ENCODE measurements at regions of chr2 and their contacts with region 1.

Region 1: DNA sequence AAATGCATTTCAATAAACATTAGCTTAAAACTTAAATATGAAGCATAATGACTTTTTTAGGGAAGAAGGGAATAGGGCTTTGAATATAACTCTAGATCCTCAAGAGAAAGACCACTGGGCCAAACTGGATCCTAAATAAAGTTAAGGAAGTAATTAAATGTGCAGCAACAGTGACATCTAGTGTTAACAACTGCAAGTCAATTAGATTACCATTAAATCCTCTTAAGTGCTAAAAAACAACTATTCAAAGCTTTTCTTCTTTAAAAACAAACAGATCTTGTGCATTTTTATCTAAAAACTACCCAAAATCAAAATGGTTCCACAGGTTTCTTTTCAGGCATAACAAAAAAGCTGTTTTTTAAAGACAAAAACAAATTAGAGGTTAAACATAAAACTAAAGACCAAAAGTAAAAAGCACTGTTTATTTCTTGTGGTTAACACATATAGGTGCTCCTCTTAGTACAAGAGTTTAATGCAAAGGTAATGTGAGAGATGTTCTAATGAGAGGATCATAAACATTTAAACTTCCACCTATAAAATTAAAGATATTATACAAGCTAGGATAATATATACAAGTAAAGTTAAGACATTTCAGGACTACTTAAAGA is 111.4 kb downstream of the THADA start:
- DNase-seq: peak; percentile 79
- ATAC-seq: no peak
- H3K4me3 ChIP-seq: no peak overlapping the region
- H3K27ac ChIP-seq: no peak overlapping the region
- H3K4me1 ChIP-seq: peaks cover 27% of the 10 kb centered on the region
- H3K27me3 ChIP-seq: no peaks in the 10 kb centered on the region
- CTCF ChIP-seq: peak; percentile 82

Region 2: DNA sequence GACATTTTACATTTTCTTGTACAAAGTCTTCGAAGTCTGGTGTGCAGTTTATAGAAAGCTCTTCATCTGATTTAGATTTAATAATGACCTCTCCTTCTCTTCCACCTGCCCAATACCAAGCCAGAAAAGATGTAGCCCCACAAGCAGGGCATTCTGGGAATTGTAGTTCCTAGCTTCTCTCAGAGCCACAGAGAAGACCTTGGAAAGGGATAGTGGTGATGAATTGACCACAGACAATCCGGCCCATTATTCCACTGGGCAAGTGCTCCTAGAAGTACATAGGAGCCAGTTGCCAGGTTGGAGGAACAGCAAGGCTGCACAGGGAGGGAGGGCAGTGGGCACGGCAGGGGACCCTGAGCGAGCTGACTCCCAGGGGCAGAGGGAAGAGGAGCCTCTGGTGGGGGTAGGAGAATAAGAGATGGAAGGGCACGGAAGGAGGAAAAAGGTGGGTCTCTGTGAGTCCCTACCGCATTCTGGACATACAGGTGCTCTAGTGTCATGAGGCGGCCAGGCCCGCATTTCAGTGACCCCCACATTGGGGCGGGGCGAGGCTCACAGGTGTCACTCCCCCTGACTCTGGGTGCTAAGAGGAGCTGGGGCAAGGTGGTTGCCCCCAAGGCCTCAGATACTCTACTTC is 539.5 kb before region 1 on chr2:
- CTCF ChIA-PET with region 1: no interaction called
- POLR2A ChIA-PET with region 1: no interaction called
- intact Hi-C with region 1: loop called (anchors 1 kb)
- DNase-seq: peak; percentile 66
- ATAC-seq: peak; percentile 64
- H3K4me3 ChIP-seq: no peak overlapping the region
- H3K27ac ChIP-seq: no peak overlapping the region
- H3K4me1 ChIP-seq: no peaks in the 10 kb centered on the region
- H3K27me3 ChIP-seq: no peaks in the 10 kb centered on the region
- CTCF ChIP-seq: no peak

Region 3: GRCh38 chr2:43088143-43089073 is 396.0 kb before region 1 on chr2:
- CTCF ChIA-PET with region 1: no interaction called
- POLR2A ChIA-PET with region 1: no interaction called
- intact Hi-C with region 1: no loop called
- DNase-seq: peak; percentile 64
- ATAC-seq: peak; percentile 62
- H3K4me3 ChIP-seq: no peak overlapping the region
- H3K27ac ChIP-seq: peak overlapping the region; percentile 19
- H3K4me1 ChIP-seq: peaks cover 47% of the 10 kb centered on the region
- H3K27me3 ChIP-seq: no peaks in the 10 kb centered on the region
- CTCF ChIP-seq: no peak

Region 4: GRCh38 chr2:43276962-43277391 is 207.4 kb before region 1 on chr2:
- CTCF ChIA-PET with region 1: interaction called, 5 read pairs
- POLR2A ChIA-PET with region 1: interaction called, 8 read pairs
- intact Hi-C with region 1: loop called (anchors 1 kb)
- DNase-seq: peak; percentile 61
- ATAC-seq: peak; percentile 19; the same call in 1 of the 2 replicates
- H3K4me3 ChIP-seq: no peak overlapping the region
- H3K27ac ChIP-seq: no peak overlapping the region
- H3K4me1 ChIP-seq: peaks cover 19% of the 10 kb centered on the region
- H3K27me3 ChIP-seq: no peaks in the 10 kb centered on the region
- CTCF ChIP-seq: no peak

Region 5: DNA sequence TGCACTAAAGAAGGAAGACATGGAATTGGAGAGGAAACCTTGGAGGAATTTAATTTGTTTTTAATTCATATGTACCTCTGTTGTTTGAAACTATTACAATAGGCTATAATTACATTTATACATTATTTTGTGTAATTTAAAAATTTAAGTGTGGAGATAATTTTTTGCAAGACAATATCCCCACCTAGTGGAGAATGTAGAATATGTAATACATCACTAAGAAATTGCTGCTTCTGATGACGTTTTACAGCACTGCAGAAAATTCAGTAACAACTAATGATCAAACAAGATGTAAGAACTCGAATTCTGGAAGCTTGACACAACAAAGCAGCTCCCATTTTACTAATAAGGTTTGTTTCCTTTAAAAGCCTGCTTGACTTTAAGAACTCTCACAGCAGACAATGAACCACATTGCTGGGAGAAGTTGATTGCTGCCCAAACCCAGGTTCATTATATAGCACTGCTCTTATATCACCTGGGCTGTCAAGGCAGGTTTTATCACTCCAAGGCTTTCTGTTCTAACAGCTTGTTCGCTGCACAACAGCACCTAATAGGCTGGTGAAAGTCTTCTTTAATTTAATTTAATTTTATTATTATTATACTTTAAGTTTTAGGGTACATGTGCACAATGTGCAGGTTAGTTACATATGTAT is 58.0 kb after region 1 on chr2:
- CTCF ChIA-PET with region 1: interaction called, 3 read pairs
- POLR2A ChIA-PET with region 1: no interaction called
- intact Hi-C with region 1: loop called (anchors 1 kb)
- DNase-seq: peak; percentile 73
- ATAC-seq: peak; percentile 56
- H3K4me3 ChIP-seq: no peak overlapping the region
- H3K27ac ChIP-seq: no peak overlapping the region
- H3K4me1 ChIP-seq: peaks cover 25% of the 10 kb centered on the region
- H3K27me3 ChIP-seq: no peaks in the 10 kb centered on the region
- CTCF ChIP-seq: peak; percentile 70

Region 6: DNA sequence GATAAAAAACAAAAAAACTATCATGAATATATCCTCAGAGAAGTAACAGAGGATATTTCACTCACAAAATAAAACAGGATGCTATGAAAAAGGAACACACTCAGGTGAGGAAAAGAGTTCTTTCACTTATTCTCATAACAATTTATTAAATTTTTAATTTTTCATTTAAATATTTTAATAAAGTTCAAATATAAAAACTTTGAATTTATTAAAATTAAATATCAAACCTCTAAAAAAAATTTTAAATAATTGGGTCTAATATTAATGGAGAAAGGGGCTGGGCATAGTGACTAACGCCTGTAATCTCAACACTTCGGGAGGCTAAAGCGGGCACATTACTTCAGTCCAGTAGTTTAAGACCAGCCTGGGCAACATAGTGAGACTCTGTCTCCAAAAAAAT is 101.3 kb after region 1 on chr2:
- CTCF ChIA-PET with region 1: no interaction called
- POLR2A ChIA-PET with region 1: no interaction called
- intact Hi-C with region 1: no loop called
- DNase-seq: no peak
- ATAC-seq: no peak
- H3K4me3 ChIP-seq: no peak overlapping the region
- H3K27ac ChIP-seq: no peak overlapping the region
- H3K4me1 ChIP-seq: no peaks in the 10 kb centered on the region
- H3K27me3 ChIP-seq: no peaks in the 10 kb centered on the region
- CTCF ChIP-seq: no peak